ENCODE measurements at regions of chr12 and their contacts with region 1.

Region 1: DNA sequence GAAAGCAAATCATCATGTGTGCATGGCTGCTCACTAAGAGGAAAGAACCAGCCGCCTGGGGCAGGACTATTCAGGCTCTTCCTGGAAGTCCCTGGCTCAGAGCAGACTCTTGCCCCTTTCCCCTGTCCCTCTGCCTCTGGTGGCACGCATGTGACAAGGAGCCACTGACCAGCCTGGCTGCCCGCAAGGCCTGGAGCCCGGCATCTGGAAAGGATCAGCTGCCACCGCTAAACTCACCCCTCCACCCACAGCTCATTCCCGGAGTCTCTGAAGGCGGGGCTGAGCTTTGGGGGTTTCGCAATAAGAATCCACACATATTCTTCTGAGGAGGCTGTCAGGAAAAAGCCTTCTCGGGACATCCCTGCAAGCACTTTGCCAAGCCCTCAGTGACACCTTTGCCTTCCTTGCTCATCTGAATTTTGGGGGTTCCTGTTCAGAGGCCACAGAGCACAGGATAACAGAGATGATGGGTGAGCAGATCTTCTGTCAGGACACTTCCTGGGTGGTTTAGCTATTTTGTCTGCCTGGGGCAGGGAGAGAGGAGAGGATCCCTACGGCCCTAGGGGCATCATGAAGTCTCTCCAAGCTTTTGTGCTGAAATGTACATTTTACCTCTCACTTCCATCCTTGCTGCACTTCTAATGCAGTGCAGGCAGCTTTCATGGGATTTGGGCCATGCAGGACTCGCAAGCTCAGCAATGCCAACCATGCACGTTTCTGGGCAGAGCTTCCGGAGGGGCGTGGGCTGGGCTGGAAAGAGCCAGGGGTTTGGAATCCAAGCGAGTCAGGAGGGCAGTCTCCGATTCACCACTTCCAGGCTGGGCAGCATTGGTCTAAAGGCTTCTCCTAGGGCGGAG is 124.8 kb upstream of the MAP1LC3B2 start:
- DNase-seq: no peak
- ATAC-seq: no peak
- H3K4me3 Mint-ChIP-seq: no peak overlapping the region
- H3K27ac Mint-ChIP-seq: no peak overlapping the region
- H3K4me1 Mint-ChIP-seq: no peaks in the 10 kb centered on the region
- H3K27me3 Mint-ChIP-seq: no peaks in the 10 kb centered on the region
- CTCF ChIP-seq: no peak

Region 2: DNA sequence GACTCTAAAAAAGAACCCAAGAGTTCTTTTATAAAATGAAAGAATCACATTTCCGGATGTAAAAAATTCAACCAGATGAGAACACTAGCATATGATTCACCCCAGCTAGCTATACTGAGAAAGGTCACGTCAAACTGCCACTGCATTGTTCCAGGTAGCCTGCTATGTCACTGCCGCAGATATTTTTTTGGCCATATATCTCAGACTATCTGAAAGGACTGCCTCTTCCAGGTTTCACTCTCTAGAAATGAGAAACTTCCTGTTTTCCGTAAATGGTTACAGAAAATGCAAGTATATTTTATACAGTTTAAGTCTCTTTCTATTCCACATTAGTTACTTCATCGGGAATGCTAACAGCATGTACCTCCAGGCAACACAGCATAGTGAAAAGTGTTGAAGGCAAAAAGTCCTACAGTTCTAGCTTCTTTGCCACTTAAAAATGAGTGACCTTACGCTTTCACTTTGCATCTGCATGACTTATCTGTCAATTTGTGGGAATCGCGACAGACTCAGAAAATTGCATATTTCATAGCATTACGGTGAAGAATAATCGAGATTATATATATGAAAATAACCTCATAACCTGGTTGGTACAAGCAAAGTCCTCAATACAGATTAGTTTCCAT is 262.0 kb before region 1 on chr12:
- CTCF ChIA-PET with region 1: no interaction called
- POLR2A ChIA-PET with region 1: interaction called, 13 read pairs
- intact Hi-C with region 1: no loop called
- DNase-seq: no peak
- ATAC-seq: peak; percentile 92
- H3K4me3 Mint-ChIP-seq: peak overlapping the region; percentile 71
- H3K27ac Mint-ChIP-seq: peak overlapping the region; percentile 73
- H3K4me1 Mint-ChIP-seq: peaks cover 65% of the 10 kb centered on the region
- H3K27me3 Mint-ChIP-seq: no peaks in the 10 kb centered on the region
- CTCF ChIP-seq: no peak

Region 3: DNA sequence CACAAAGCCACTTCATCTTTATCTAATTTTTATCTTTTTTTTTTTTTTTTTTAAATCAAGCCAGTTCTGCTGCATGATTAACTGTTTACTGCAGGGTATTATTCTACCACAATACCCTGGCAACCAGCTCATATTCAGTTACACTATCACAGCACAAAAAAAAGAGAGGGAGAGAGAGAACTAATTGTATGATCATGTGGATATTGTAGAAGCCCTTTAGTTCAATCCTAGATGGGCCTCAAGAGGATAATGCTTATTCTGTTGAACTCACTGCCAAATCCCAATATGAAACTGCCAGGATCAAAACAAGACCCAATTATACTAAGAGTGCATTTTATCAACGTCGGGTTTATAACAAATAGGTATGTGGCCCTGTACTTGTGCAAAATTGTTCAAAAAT is 208.4 kb before region 1 on chr12:
- CTCF ChIA-PET with region 1: no interaction called
- POLR2A ChIA-PET with region 1: no interaction called
- intact Hi-C with region 1: no loop called
- DNase-seq: no peak
- ATAC-seq: no peak
- H3K4me3 Mint-ChIP-seq: no peak overlapping the region
- H3K27ac Mint-ChIP-seq: no peak overlapping the region
- H3K4me1 Mint-ChIP-seq: peaks cover 14% of the 10 kb centered on the region
- H3K27me3 Mint-ChIP-seq: no peaks in the 10 kb centered on the region
- CTCF ChIP-seq: no peak

Measured in activated B cell treated with CpG ODN at 0.5 μM for 24 hours (primary cell).